Caco-2 (cell line): ENCODE measurements at regions of chr6 and their contacts with region 1.

Region 1: GRCh38 chr6:73484438-73484837 is 22.9 kb downstream of the MTO1 start:
- DNase-seq: no peak
- H3K4me3 ChIP-seq: no peak overlapping the region
- H3K4me3 Mint-ChIP-seq: no peak overlapping the region
- H3K27ac Mint-ChIP-seq: no peak overlapping the region
- H3K4me1 ChIP-seq: no peaks in the 10 kb centered on the region
- H3K4me1 Mint-ChIP-seq: no peaks in the 10 kb centered on the region
- H3K27me3 ChIP-seq: no peaks in the 10 kb centered on the region
- H3K27me3 Mint-ChIP-seq: no peaks in the 10 kb centered on the region
- CTCF ChIP-seq: no peak

Region 2: GRCh38 chr6:72783035-72783434 is 701.4 kb before region 1 on chr6:
- CTCF ChIA-PET with region 1: no interaction called
- POLR2A ChIA-PET with region 1: interaction called, 12 read pairs
- intact Hi-C with region 1: no loop called
- DNase-seq: no peak
- H3K4me3 ChIP-seq: no peak overlapping the region
- H3K4me3 Mint-ChIP-seq: no peak overlapping the region
- H3K27ac Mint-ChIP-seq: no peak overlapping the region
- H3K4me1 ChIP-seq: no peaks in the 10 kb centered on the region
- H3K4me1 Mint-ChIP-seq: no peaks in the 10 kb centered on the region
- H3K27me3 ChIP-seq: no peaks in the 10 kb centered on the region
- H3K27me3 Mint-ChIP-seq: peaks cover 5% of the 10 kb centered on the region
- CTCF ChIP-seq: no peak